IMR-90 (cell line): ENCODE measurements at regions of chr5 and their contacts with region 1.

Region 1: GRCh38 chr5:82480331-82480730 is 202.2 kb upstream of the RPS23 start:
- DNase-seq: no peak
- ATAC-seq: no peak
- H3K4me3 ChIP-seq: no peak overlapping the region
- H3K27ac ChIP-seq: no peak overlapping the region
- H3K4me1 ChIP-seq: no peaks in the 10 kb centered on the region
- H3K27me3 ChIP-seq: peaks cover 15% of the 10 kb centered on the region
- CTCF ChIP-seq: no peak
- POLR2A ChIP-seq: no peak
- RAD21 ChIP-seq: no peak

Region 2: DNA sequence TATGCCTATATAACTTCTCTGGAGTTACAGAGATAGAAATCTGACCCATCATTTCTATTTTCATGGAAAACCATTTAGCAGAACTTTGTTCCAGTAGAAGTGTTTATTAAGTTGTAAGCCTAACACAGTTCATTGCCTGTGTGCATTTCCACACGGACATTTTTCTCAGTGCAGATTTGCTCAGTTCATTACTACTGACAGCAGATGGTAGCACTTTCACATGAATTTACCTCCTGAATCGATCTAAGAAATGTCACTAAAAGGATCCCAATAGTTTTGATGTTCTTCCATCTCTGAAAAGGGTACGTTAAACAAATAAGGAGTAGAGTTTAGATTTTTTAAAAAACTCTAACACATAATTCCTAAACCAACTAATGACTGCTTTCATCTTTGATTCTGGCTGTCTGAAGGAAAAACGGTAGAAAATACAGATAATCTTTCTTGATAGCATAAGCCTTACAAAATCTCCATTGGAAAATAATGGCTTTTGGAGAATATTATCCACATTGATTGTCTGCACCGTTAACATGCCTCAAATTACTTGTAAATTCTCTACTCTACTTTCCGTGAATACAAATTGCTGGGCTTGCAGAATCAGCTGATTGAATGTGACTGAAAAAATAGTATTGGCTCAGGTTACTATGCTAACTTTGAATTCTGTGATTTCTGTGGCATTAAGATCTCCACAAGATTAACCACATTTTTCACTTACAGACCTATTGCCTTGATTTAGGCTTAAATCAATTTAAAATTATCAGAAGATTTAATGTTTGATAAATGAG is 235.3 kb before region 1 on chr5:
- CTCF ChIA-PET with region 1: no interaction called
- POLR2A ChIA-PET with region 1: no interaction called
- dilution Hi-C with region 1: no loop called
- in situ Hi-C with region 1: no loop called
- intact Hi-C with region 1: no loop called
- DNase-seq: no peak
- ATAC-seq: no peak; the same call in 1 of the 2 replicates
- H3K4me3 ChIP-seq: no peak overlapping the region
- H3K27ac ChIP-seq: no peak overlapping the region
- H3K4me1 ChIP-seq: no peaks in the 10 kb centered on the region
- H3K27me3 ChIP-seq: no peaks in the 10 kb centered on the region
- CTCF ChIP-seq: no peak
- POLR2A ChIP-seq: no peak
- RAD21 ChIP-seq: 0 out of 2 replicates have a peak, but pooled peaks have one; percentile 14

Region 3: GRCh38 chr5:82287625-82288024 is 192.7 kb before region 1 on chr5:
- CTCF ChIA-PET with region 1: no interaction called
- POLR2A ChIA-PET with region 1: no interaction called
- dilution Hi-C with region 1: no loop called
- in situ Hi-C with region 1: no loop called
- intact Hi-C with region 1: no loop called
- DNase-seq: no peak
- ATAC-seq: no peak
- H3K4me3 ChIP-seq: no peak overlapping the region
- H3K27ac ChIP-seq: no peak overlapping the region
- H3K4me1 ChIP-seq: no peaks in the 10 kb centered on the region
- H3K27me3 ChIP-seq: no peaks in the 10 kb centered on the region
- CTCF ChIP-seq: no peak
- POLR2A ChIP-seq: no peak
- RAD21 ChIP-seq: no peak

Region 4: DNA sequence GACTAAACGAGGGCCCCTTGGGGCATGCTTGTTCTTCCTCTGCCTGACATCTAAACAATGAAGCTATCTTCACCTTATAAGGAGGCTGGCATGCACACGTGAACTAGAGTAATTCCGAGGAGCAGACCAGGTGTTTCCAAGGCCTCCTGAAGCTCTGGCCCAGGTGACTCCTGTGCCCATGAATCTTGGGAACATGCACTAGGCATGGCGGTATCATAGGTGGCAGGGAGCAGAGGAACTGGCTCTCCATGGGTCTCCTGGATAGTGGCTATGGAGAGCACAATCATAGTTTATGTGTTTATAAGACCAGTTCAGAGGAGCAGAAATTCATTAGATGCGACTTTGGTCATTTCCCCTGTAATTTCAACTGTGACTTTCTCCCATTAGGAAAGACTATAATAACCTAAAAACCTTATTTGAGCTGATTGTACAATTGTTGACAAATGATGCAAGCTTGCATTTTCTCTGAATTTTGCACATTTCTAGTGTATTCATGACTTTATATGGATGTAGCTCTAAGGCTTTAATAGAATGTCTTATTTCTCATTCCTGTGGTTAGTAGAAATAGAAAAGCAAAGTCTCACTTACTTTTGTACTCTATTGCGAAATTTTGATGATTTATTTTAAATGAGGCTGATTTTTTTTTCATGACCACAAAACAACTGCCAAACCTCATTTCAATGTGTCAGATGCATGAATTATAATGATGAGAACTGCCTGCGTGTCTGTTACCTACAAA is 66.9 kb before region 1 on chr5:
- CTCF ChIA-PET with region 1: no interaction called
- POLR2A ChIA-PET with region 1: no interaction called
- dilution Hi-C with region 1: no loop called
- in situ Hi-C with region 1: no loop called
- intact Hi-C with region 1: no loop called
- DNase-seq: peak; percentile 83
- ATAC-seq: peak; percentile 86
- H3K4me3 ChIP-seq: no peak overlapping the region
- H3K27ac ChIP-seq: peak overlapping the region; percentile 100
- H3K4me1 ChIP-seq: peaks cover 13% of the 10 kb centered on the region
- H3K27me3 ChIP-seq: no peaks in the 10 kb centered on the region
- CTCF ChIP-seq: no peak
- POLR2A ChIP-seq: no peak
- RAD21 ChIP-seq: no peak

Region 5: GRCh38 chr5:82549263-82549662 is 68.9 kb after region 1 on chr5:
- CTCF ChIA-PET with region 1: no interaction called
- POLR2A ChIA-PET with region 1: no interaction called
- dilution Hi-C with region 1: no loop called
- in situ Hi-C with region 1: no loop called
- intact Hi-C with region 1: loop called (anchors 5 kb)
- DNase-seq: no peak
- ATAC-seq: no peak
- H3K4me3 ChIP-seq: no peak overlapping the region
- H3K27ac ChIP-seq: no peak overlapping the region
- H3K4me1 ChIP-seq: no peaks in the 10 kb centered on the region
- H3K27me3 ChIP-seq: no peaks in the 10 kb centered on the region; the same call in 1 of the 2 replicates
- CTCF ChIP-seq: no peak
- POLR2A ChIP-seq: no peak
- RAD21 ChIP-seq: no peak

Region 6: DNA sequence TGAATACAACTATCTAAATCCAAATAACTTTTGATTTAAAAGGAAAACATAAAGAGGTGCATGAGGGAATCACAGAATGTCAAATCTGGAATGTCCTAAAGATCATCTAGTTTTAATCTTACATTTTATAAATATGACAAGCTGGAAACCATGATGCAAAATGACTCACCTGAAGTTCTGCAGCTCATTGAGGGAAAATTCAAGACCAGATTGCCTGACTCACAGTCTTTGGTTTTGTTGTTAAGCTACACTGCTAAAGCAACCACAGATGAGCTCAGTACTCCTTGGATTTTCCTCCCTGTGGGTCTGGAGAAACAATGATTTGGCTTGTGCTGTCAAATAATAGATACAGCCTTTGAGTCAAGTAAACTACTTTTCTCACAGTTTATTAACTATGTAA is 1923.4 kb after region 1 on chr5:
- CTCF ChIA-PET with region 1: no interaction called
- POLR2A ChIA-PET with region 1: no interaction called
- dilution Hi-C with region 1: no loop called
- in situ Hi-C with region 1: no loop called
- intact Hi-C with region 1: no loop called
- DNase-seq: peak; percentile 97
- ATAC-seq: peak; percentile 83
- H3K4me3 ChIP-seq: no peak overlapping the region
- H3K27ac ChIP-seq: no peak overlapping the region
- H3K4me1 ChIP-seq: no peaks in the 10 kb centered on the region; the same call in 1 of the 2 replicates
- H3K27me3 ChIP-seq: no peaks in the 10 kb centered on the region
- CTCF ChIP-seq: no peak
- POLR2A ChIP-seq: no peak
- RAD21 ChIP-seq: no peak